Panc1 (cell line): ENCODE measurements at regions of chr1 and their contacts with region 1.

Region 1: DNA sequence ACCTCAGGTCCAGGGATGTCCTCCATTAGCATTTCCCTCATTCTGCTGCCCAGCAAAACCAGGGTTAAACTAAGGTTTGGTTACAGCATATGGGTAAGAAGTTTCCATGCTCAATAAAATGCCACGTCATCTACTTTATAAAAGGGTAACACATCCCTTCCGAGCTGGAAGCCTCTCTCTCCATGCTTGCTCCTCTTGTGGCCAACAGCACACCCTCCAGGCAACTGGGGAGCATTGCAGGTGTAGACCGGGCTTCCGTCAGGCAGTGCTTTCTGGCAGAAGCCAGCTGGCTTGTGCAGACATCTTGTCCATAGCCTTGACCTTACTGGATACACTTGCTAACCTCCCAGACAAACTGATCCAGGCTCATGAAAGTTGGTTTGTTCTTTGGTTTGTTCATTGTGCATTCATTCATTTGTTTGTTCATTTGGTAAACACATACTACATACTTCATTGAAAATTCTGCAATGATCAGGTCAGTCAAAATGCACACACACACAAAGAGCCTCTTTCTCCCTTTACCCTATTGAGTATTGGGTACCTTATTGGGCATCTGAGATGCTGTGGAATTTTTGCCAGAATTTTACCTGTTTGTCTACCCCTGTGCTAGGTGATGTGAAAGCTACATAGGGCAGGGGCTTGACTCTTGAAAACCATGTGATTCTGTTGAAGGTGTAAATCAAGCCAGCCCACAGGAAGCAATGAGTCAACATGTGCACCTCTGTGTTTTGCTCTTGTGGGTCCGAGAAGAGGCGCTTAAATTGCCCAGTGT is 422.8 kb downstream of the CAMTA1 start:
- DNase-seq: no peak
- ATAC-seq: peak; percentile 88
- H3K4me3 ChIP-seq: no peak overlapping the region
- H3K27ac ChIP-seq: no peak overlapping the region
- H3K4me1 ChIP-seq: no peaks in the 10 kb centered on the region
- H3K27me3 ChIP-seq: 0 out of 2 replicates have a peak, but pooled peaks cover 2% of the 10 kb centered on the region
- CTCF ChIP-seq: peak; percentile 85

Region 2: DNA sequence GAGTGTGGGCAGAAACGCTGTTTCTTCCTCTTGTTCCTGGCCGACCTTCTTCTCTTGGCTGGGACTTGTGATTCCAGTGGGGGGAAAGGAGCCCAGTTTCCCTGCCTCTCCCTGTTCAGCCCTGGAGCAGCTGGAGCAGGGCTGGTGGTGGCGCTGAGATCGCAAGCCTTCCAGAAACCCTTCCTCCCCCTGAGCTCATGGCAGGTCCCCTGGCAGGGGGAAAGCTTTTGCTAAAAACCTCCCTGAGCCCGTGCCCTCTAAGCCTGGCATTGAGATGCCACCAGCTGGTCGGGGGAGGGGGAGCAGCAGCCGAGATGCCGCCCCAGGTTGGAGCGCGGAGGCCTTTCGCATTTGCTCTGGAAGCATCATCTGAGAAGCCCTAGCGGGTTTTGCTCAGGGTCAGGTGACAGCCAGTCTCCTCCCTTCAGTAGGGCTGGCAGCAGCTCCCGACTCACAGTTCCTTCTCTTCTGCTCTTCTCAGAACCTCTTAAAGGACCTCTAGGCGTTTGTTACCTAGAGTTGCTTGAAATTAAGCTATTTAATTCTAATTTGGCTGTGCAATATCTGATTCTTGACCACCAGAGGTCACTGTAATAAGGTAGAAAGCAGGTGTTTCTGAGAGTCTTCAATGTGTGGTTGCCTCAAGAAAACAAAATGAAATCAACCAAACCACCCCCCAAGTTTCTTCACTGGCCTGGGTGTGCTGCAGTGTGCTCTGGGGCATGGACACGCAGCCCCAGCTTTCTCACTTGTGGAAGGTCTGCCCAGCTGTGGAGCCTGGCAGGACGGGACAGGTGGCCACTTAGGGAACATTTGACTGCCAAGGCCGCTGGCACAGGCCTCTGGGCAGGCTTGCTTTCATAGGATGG is 165.5 kb before region 1 on chr1:
- CTCF ChIA-PET with region 1: interaction called, 13 read pairs
- POLR2A ChIA-PET with region 1: no interaction called
- in situ Hi-C with region 1: no loop called
- intact Hi-C with region 1: loop called (anchors 5 kb)
- DNase-seq: peak; percentile 15
- ATAC-seq: peak; percentile 71
- H3K4me3 ChIP-seq: no peak overlapping the region
- H3K27ac ChIP-seq: no peak overlapping the region
- H3K4me1 ChIP-seq: no peaks in the 10 kb centered on the region
- H3K27me3 ChIP-seq: no peaks in the 10 kb centered on the region
- CTCF ChIP-seq: peak; percentile 82

Region 3: GRCh38 chr1:7299329-7299799 is 91.3 kb after region 1 on chr1:
- CTCF ChIA-PET with region 1: no interaction called
- POLR2A ChIA-PET with region 1: no interaction called
- in situ Hi-C with region 1: no loop called
- intact Hi-C with region 1: no loop called
- DNase-seq: peak; percentile 82
- ATAC-seq: peak; percentile 93
- H3K4me3 ChIP-seq: peak overlapping the region in 1 of 2 experiments; percentile 43; a peak in 2 of 4 replicates
- H3K27ac ChIP-seq: peak overlapping the region; percentile 90
- H3K4me1 ChIP-seq: peaks cover 39% of the 10 kb centered on the region
- H3K27me3 ChIP-seq: no peaks in the 10 kb centered on the region
- CTCF ChIP-seq: no peak